Heart left ventricle (tissue), 16 donors: ENCODE measurements at regions of chr10 and their contacts with region 1.

Region 1: DNA sequence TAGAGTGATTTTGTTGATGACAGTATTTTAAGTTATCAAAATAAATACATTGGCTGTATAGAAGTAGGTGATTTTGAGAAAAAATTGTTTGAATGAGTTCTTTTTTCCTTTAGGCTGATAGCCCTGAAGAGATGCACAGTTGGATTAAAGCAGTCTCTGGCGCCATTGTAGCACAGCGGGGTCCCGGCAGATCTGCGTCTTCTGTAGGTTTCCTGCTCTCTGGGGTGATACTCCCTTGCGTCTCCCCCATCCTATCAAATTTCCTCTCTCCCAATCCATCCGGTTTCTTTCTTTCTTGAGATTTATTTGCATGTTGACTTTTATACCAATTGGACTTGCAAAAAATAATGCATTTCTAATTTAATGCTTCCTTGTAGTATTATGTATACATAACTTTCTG is 27.6 kb upstream of the ARMS2 start:
- DNase-seq: no peak
- ATAC-seq: no peak
- H3K4me3 ChIP-seq: no peak overlapping the region
- H3K27ac ChIP-seq: no peak overlapping the region
- H3K4me1 ChIP-seq: peaks cover 0 to 14% (median 3%) of the 10 kb centered on the region in 12 donors
- H3K27me3 ChIP-seq: no peaks in the 10 kb centered on the region
- CTCF ChIP-seq: no peak
- POLR2A ChIP-seq: no peak

Region 2: GRCh38 chr10:122407375-122408125 is 19.3 kb before region 1 on chr10:
- intact Hi-C with region 1: loop called in 1 of 10 experiments (anchors 2 kb)
- DNase-seq: peak in 2 of 5 donors; percentile 22 to 34
- ATAC-seq: peak in 2 of 4 donors; percentile 16 to 54
- H3K4me3 ChIP-seq: no peak overlapping the region
- H3K27ac ChIP-seq: peak overlapping the region in 7 of 12 donors; percentile 3 to 66 (median 58)
- H3K4me1 ChIP-seq: peaks cover 0 to 38% (median 26%) of the 10 kb centered on the region in 12 donors
- H3K27me3 ChIP-seq: no peaks in the 10 kb centered on the region
- CTCF ChIP-seq: no peak
- POLR2A ChIP-seq: no peak

Region 3: DNA sequence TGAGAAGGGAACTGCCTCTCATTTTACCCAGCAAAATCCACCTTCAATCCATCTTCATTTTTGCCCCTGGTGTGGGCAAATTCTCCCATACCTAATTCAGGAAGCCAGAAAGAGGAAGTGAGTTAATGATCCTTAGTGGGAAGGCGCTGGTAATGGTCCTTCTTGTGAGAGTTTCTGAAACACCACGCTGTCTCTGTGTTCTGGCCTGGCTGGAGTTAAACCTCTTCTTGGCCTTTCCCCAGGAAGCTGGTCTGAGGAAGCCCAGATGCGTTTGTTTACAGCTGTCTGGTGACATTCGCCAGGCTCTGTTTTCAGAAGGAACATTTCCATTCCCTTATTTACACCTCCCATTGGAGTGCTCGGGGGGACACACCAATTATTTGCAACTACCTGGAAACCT is 58.8 kb after region 1 on chr10:
- intact Hi-C with region 1: no loop called
- DNase-seq: peak in 2 of 5 donors; percentile 51 to 55
- ATAC-seq: peak; percentile 66 to 80 (median 70)
- H3K4me3 ChIP-seq: no peak overlapping the region
- H3K27ac ChIP-seq: peak overlapping the region in 3 of 12 donors; percentile 35 to 70 (median 37)
- H3K4me1 ChIP-seq: peaks cover 0 to 44% (median 24%) of the 10 kb centered on the region in 12 donors
- H3K27me3 ChIP-seq: no peaks in the 10 kb centered on the region
- CTCF ChIP-seq: no peak
- POLR2A ChIP-seq: no peak

Region 4: DNA sequence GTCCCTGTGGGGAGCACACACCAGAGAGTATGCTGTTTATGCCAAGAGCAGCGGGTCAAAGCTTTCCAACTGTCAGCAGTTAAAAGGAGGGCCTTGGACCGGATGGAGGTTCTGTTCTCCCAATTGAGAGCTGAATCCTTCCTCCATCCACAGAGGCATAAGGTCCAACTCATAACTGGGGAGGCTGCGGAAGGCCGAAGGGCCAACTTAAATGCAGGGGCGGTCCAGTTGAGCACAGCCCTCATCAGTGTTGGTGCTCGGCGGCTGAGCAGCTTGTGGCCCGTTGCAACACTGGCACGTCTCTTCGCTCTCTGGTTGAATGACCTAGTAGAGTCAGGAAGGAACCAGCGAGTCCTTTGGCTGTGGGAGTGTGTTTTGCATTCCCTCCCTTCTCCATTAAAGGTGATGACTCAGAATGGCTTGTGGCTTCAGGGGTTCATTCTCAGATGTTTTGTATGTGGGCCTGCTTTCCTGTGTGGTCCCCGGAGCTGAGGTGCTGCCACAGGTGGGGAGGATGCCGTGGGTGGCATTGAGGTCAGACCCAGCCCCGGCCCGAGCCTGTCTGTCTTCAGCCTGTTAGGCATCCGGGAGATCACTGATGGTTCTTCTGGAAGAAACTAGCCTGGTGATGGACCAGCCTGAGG is 88.9 kb after region 1 on chr10:
- intact Hi-C with region 1: no loop called
- DNase-seq: peak in 3 of 5 donors; percentile 28 to 68 (median 50)
- ATAC-seq: peak; percentile 40 to 76 (median 66)
- H3K4me3 ChIP-seq: no peak overlapping the region
- H3K27ac ChIP-seq: peak overlapping the region in 11 of 12 donors; percentile 28 to 66 (median 48)
- H3K4me1 ChIP-seq: peaks cover 0 to 25% (median 4%) of the 10 kb centered on the region in 12 donors
- H3K27me3 ChIP-seq: no peaks in the 10 kb centered on the region
- CTCF ChIP-seq: no peak
- POLR2A ChIP-seq: no peak